A673 (cell line): ENCODE measurements at regions of chr18 and their contacts with region 1.

Region 1: GRCh38 chr18:68507781-68508180 is 207.1 kb downstream of the TMX3 start:
- DNase-seq: no peak
- H3K4me3 ChIP-seq: no peak overlapping the region
- H3K27ac ChIP-seq: peak overlapping the region; percentile 96
- H3K4me1 ChIP-seq: peaks cover 33% of the 10 kb centered on the region
- H3K27me3 ChIP-seq: no peaks in the 10 kb centered on the region
- CTCF ChIP-seq: no peak

Region 2: GRCh38 chr18:67232406-67232805 is 1275.4 kb before region 1 on chr18:
- CTCF ChIA-PET with region 1: no interaction called
- POLR2A ChIA-PET with region 1: no interaction called
- intact Hi-C with region 1: loop called (anchors 5 kb)
- DNase-seq: peak; percentile 87
- H3K4me3 ChIP-seq: peak overlapping the region; percentile 5
- H3K27ac ChIP-seq: peak overlapping the region; percentile 70
- H3K4me1 ChIP-seq: peaks cover 10% of the 10 kb centered on the region
- H3K27me3 ChIP-seq: no peaks in the 10 kb centered on the region
- CTCF ChIP-seq: no peak

Region 3: GRCh38 chr18:67590571-67591141 is 917.1 kb before region 1 on chr18:
- CTCF ChIA-PET with region 1: no interaction called
- POLR2A ChIA-PET with region 1: no interaction called
- intact Hi-C with region 1: loop called (anchors 10 kb)
- DNase-seq: peak; percentile 76
- H3K4me3 ChIP-seq: no peak overlapping the region
- H3K27ac ChIP-seq: no peak overlapping the region
- H3K4me1 ChIP-seq: peaks cover 7% of the 10 kb centered on the region
- H3K27me3 ChIP-seq: no peaks in the 10 kb centered on the region
- CTCF ChIP-seq: peak; percentile 45

Region 4: GRCh38 chr18:67884429-67884828 is 623.4 kb before region 1 on chr18:
- CTCF ChIA-PET with region 1: no interaction called
- POLR2A ChIA-PET with region 1: no interaction called
- intact Hi-C with region 1: loop called (anchors 5 kb)
- DNase-seq: no peak
- H3K4me3 ChIP-seq: no peak overlapping the region
- H3K27ac ChIP-seq: no peak overlapping the region
- H3K4me1 ChIP-seq: peaks cover 9% of the 10 kb centered on the region
- H3K27me3 ChIP-seq: no peaks in the 10 kb centered on the region
- CTCF ChIP-seq: no peak

Region 5: DNA sequence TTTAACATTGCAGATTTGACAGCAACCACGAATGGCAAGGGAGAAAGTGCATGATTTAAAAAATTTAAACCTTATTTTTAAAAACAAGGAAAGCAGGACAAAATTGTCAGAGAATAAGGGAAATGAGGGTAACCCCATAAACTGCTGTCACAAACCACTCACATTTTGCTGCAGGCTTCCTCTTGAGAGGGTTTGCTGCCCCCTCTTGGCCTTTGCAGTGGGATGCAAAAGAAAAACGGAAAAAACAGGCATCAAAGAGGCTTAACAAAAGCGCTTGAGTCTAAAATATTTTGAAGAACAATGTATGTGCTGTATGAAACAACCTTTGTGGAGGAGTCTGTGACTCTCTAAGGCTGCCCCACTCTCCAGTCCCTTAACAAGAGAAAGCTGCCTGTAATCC is 115.6 kb after region 1 on chr18:
- CTCF ChIA-PET with region 1: interaction called, 3 read pairs
- POLR2A ChIA-PET with region 1: no interaction called
- intact Hi-C with region 1: loop called (anchors 1 kb)
- DNase-seq: peak; percentile 92
- H3K4me3 ChIP-seq: no peak overlapping the region
- H3K27ac ChIP-seq: peak overlapping the region; percentile 57
- H3K4me1 ChIP-seq: peaks cover 16% of the 10 kb centered on the region
- H3K27me3 ChIP-seq: no peaks in the 10 kb centered on the region
- CTCF ChIP-seq: peak; percentile 85

Region 6: DNA sequence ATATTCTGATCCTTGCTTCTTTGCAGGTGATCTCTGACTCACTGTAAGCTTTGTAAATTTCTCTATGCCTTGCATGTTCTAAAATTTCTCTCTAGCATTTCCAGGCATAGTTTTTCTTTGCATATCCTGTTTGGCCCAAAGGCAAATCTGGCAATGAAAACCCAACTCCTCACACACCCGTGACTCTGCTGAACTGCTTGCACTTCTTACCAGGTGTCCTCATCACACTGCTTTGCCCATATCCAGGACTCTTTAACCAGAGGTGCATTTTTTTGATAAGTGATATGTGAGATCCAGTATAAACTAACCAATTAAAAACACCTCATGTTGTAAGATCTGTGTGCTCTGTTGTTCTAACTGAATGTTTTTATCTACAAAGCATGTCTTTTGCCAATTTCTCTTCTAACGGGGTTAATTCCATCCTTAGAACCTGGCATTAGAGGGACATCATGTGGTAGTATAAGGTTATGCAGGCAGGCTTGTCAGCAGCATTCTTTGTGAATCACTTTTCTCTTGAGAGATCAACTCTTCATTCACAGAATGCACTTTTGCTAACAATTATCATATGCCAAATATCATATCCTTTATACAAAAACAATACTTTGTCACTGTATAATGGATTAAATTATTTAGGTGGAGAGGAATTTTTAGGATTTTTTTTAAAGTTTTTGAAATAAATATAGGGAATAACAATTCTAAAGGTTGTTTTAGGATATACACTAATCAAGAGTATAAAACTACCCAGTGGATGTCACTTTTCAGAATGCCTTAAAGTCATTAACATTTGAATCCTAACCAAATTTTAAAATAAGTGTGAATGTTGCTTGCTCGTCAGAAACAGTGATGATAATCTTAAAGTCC is 227.9 kb after region 1 on chr18:
- CTCF ChIA-PET with region 1: no interaction called
- POLR2A ChIA-PET with region 1: no interaction called
- intact Hi-C with region 1: loop called (anchors 5 kb)
- DNase-seq: peak; percentile 78
- H3K4me3 ChIP-seq: no peak overlapping the region
- H3K27ac ChIP-seq: no peak overlapping the region
- H3K4me1 ChIP-seq: peaks cover 18% of the 10 kb centered on the region
- H3K27me3 ChIP-seq: no peaks in the 10 kb centered on the region
- CTCF ChIP-seq: peak; percentile 91

Region 7: GRCh38 chr18:68865021-68865420 is 357.2 kb after region 1 on chr18:
- CTCF ChIA-PET with region 1: no interaction called
- POLR2A ChIA-PET with region 1: no interaction called
- intact Hi-C with region 1: no loop called
- DNase-seq: no peak
- H3K4me3 ChIP-seq: no peak overlapping the region
- H3K27ac ChIP-seq: no peak overlapping the region
- H3K4me1 ChIP-seq: no peaks in the 10 kb centered on the region
- H3K27me3 ChIP-seq: no peaks in the 10 kb centered on the region
- CTCF ChIP-seq: no peak